Natural killer cell (primary cell): ENCODE measurements at regions of chr1 and their contacts with region 1.

Region 1: GRCh38 chr1:200128944-200129885 is 101.7 kb downstream of the NR5A2 start:
- DNase-seq: peak; percentile 26 to 67
- ATAC-seq: peak; percentile 91 to 94 (median 93)
- H3K4me3 ChIP-seq: no peak overlapping the region
- H3K4me3 Mint-ChIP-seq: peak overlapping the region; percentile 72
- H3K27ac ChIP-seq: peak overlapping the region; percentile 62
- H3K27ac Mint-ChIP-seq: peak overlapping the region; percentile 88 to 91
- H3K4me1 ChIP-seq: peaks cover 6% of the 10 kb centered on the region
- H3K4me1 Mint-ChIP-seq: peaks cover 32 to 34% of the 10 kb centered on the region in 2 donors
- H3K27me3 ChIP-seq: no peaks in the 10 kb centered on the region
- H3K27me3 Mint-ChIP-seq: no peaks in the 10 kb centered on the region
- CTCF ChIP-seq: no peak

Region 2: GRCh38 chr1:200154069-200154767 is 25.0 kb after region 1 on chr1:
- intact Hi-C with region 1: loop called (anchors 1 kb)
- DNase-seq: peak; percentile 55 to 80
- ATAC-seq: peak; percentile 86 to 97 (median 92)
- H3K4me3 ChIP-seq: no peak overlapping the region
- H3K4me3 Mint-ChIP-seq: peak overlapping the region; percentile 64
- H3K27ac ChIP-seq: peak overlapping the region; percentile 66
- H3K27ac Mint-ChIP-seq: peak overlapping the region; percentile 79 to 86
- H3K4me1 ChIP-seq: peaks cover 14% of the 10 kb centered on the region
- H3K4me1 Mint-ChIP-seq: peaks cover 25 to 28% of the 10 kb centered on the region in 2 donors
- H3K27me3 ChIP-seq: no peaks in the 10 kb centered on the region
- H3K27me3 Mint-ChIP-seq: peaks cover 4 to 9% of the 10 kb centered on the region in 2 donors
- CTCF ChIP-seq: no peak

Region 3: GRCh38 chr1:200323918-200324317 is 194.7 kb after region 1 on chr1:
- intact Hi-C with region 1: no loop called
- DNase-seq: no peak
- ATAC-seq: no peak
- H3K4me3 ChIP-seq: no peak overlapping the region
- H3K4me3 Mint-ChIP-seq: no peak overlapping the region
- H3K27ac ChIP-seq: no peak overlapping the region
- H3K27ac Mint-ChIP-seq: no peak overlapping the region
- H3K4me1 ChIP-seq: no peaks in the 10 kb centered on the region
- H3K4me1 Mint-ChIP-seq: no peaks in the 10 kb centered on the region
- H3K27me3 ChIP-seq: no peaks in the 10 kb centered on the region
- H3K27me3 Mint-ChIP-seq: peaks cover 17 to 19% of the 10 kb centered on the region in 2 donors
- CTCF ChIP-seq: no peak